PC-9 (cell line): ENCODE measurements at regions of chr12 and their contacts with region 1.

Region 1: GRCh38 chr12:13196130-13196921 is at the start of gene EMP1:
- DNase-seq: peak; percentile 96 to 100
- H3K4me3 ChIP-seq: peak within 1 kb of the TSS; percentile 97
- H3K27ac ChIP-seq: peak within 1 kb of the TSS; percentile 99
- H3K4me1 ChIP-seq: peaks cover 66% of the 10 kb centered on the region
- H3K27me3 ChIP-seq: no peaks in the 10 kb centered on the region
- CTCF ChIP-seq: no peak
- total RNA-seq, gene EMP1: 542 and 909 TPM in 2 replicates

Region 2: GRCh38 chr12:12673296-12673695 is 523.0 kb before region 1 on chr12:
- CTCF ChIA-PET with region 1: no interaction called
- POLR2A ChIA-PET with region 1: no interaction called
- intact Hi-C with region 1: no loop called
- DNase-seq: no peak
- H3K4me3 ChIP-seq: no peak overlapping the region
- H3K27ac ChIP-seq: no peak overlapping the region
- H3K4me1 ChIP-seq: 0 out of 2 replicates have a peak, but pooled peaks cover 4% of the 10 kb centered on the region
- H3K27me3 ChIP-seq: no peaks in the 10 kb centered on the region
- CTCF ChIP-seq: no peak

Region 3: GRCh38 chr12:12901158-12901791 is 295.1 kb before region 1 on chr12:
- CTCF ChIA-PET with region 1: no interaction called
- POLR2A ChIA-PET with region 1: no interaction called
- intact Hi-C with region 1: no loop called
- DNase-seq: peak; percentile 60 to 86
- H3K4me3 ChIP-seq: peak overlapping the region; percentile 19; the same call in 1 of the 2 replicates
- H3K27ac ChIP-seq: peak overlapping the region; percentile 76
- H3K4me1 ChIP-seq: peaks cover 84% of the 10 kb centered on the region
- H3K27me3 ChIP-seq: no peaks in the 10 kb centered on the region
- CTCF ChIP-seq: no peak

Region 4: DNA sequence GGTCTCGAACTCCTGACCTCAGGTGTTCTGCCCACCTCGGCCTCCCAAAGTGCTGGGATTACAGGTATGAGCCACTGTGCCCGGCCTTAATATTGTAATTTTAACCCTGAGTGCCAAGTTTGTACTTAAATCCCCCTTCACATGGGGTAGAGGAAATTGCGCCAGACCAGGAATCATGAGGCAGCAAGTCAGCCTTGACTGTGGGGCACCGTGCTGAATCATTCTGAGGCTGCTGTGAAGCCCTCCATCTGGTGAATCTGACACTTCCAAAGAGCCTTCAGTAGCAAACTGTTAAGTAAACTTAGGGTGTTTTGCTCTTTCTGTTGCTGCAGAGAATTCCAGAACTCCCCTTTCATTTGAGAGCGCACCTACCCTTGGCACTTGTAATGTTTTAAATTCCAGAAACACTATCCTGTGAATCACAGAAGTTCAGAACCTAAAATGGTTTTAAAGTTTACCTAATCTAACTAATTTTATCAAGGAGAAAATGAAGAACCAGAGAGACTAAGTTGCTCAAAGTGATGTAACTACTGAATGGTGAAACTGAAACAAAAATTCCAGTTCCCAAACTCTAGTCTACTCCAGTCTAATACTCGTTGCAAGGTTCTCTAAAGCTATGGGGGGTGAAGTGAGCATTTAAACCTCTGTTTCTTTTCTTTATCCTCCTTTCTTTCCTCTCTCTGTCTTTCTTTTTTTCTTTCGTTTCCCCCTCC is 203.8 kb before region 1 on chr12:
- CTCF ChIA-PET with region 1: interaction called, 6 read pairs
- POLR2A ChIA-PET with region 1: interaction called, 14 read pairs
- intact Hi-C with region 1: no loop called
- DNase-seq: peak in 1 of 2 experiments; percentile 37
- H3K4me3 ChIP-seq: no peak overlapping the region
- H3K27ac ChIP-seq: peak overlapping the region; percentile 46
- H3K4me1 ChIP-seq: peaks cover 24% of the 10 kb centered on the region
- H3K27me3 ChIP-seq: no peaks in the 10 kb centered on the region
- CTCF ChIP-seq: no peak

Region 5: DNA sequence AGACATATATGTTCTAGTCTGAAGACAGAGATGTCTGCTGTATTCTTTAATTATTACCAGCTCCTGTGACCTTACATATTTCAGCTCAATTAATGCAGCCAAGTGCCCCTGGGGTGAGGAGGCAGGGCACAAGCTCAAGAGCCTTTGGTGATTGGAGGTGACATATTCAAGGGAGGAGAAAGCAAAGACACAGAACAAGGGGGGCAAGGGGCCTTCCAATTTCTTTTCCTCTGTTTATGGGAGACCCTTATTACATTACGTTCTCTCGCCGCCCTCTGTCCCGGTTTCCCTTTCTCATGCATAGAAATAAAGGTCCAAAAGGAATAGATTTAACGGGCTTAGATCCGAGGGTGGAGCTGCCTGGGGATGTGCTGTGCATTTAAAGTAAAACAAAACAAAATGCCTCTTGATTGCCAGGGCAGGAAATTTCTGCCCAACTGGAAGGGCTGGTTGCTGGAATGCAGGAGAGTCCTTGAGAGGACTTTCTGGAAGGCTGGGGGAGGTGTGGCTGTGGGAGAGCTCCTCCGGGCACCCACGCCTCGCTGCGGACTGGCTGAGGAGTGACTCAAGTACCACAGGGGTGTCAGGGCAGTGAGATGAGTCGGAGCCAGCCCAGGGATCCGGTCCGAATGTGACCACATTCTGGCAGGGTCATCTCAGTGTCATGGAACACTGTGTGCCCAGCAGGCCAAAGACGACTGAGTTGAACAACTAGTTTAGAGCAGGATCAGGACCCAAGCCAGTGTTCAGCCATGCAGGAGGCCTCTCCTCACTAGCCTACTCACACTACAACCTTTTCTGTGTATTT is 60.8 kb before region 1 on chr12:
- CTCF ChIA-PET with region 1: interaction called, 4 read pairs
- POLR2A ChIA-PET with region 1: interaction called, 48 read pairs
- intact Hi-C with region 1: loop called (anchors 1 kb)
- DNase-seq: peak; percentile 99
- H3K4me3 ChIP-seq: peak overlapping the region; percentile 39; the same call in 1 of the 2 replicates
- H3K27ac ChIP-seq: peak overlapping the region; percentile 88
- H3K4me1 ChIP-seq: peaks cover 50% of the 10 kb centered on the region
- H3K27me3 ChIP-seq: no peaks in the 10 kb centered on the region
- CTCF ChIP-seq: peak; percentile 32; the same call in 1 of the 2 replicates

Region 6: GRCh38 chr12:13165617-13166041 is 30.7 kb before region 1 on chr12:
- CTCF ChIA-PET with region 1: interaction called, 4 read pairs
- POLR2A ChIA-PET with region 1: interaction called, 24 read pairs
- intact Hi-C with region 1: loop called (anchors 1 kb)
- DNase-seq: peak; percentile 95 to 98
- H3K4me3 ChIP-seq: no peak overlapping the region
- H3K27ac ChIP-seq: peak overlapping the region; percentile 97
- H3K4me1 ChIP-seq: peaks cover 73% of the 10 kb centered on the region
- H3K27me3 ChIP-seq: no peaks in the 10 kb centered on the region
- CTCF ChIP-seq: no peak

Region 7: DNA sequence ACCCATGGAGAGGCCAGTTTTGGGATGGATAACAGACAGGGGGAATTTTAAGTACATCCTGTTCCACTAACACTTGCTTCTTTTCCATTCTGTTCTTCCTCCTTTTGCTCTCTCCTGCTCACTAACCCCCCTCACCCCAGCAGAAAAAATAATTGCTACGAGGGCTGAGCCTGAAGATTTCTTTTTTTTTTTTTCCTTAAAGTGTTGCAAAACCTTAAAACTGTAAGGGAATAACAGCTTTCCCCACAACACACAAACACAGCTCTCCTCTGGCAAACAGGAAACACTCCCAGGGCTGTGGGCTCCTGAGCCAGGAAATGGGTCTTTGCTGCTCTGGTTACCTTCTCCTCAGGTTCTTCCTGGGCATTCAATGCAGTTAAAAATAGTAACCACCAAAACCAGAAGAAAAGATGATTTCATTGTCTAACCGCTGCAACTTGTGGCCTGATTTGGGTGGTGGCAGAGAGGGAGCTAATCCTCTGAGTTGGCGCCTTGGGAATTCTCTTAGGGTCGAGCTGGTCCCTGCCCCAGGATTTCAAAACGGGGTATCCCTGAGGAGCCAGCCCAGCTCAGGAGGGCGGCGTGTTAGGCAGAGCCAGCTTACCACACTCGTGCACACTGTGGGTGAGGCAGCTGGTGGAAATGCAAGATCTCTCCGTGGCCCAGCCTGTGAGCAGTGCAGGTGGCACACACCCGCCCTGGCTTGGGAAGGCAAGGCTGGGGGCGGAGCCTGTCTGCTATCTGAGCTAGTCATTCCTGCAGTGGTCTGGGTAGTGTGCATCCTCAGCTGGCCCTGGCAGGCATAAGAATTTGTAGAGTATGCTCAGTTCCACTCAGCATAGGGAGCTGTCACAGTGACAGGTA is 16.9 kb before region 1 on chr12:
- CTCF ChIA-PET with region 1: interaction called, 3 read pairs
- POLR2A ChIA-PET with region 1: interaction called, 138 read pairs
- intact Hi-C with region 1: loop called (anchors 1 kb)
- DNase-seq: peak; percentile 94 to 95
- H3K4me3 ChIP-seq: peak overlapping the region; percentile 39; the same call in 1 of the 2 replicates
- H3K27ac ChIP-seq: peak overlapping the region; percentile 95
- H3K4me1 ChIP-seq: peaks cover 89% of the 10 kb centered on the region
- H3K27me3 ChIP-seq: no peaks in the 10 kb centered on the region
- CTCF ChIP-seq: no peak

Region 8: GRCh38 chr12:13223179-13223859 is 27.0 kb after region 1 on chr12:
- CTCF ChIA-PET with region 1: interaction called, 3 read pairs
- POLR2A ChIA-PET with region 1: interaction called, 19 read pairs
- intact Hi-C with region 1: no loop called
- DNase-seq: peak; percentile 71 to 95
- H3K4me3 ChIP-seq: no peak overlapping the region
- H3K27ac ChIP-seq: peak overlapping the region; percentile 96
- H3K4me1 ChIP-seq: peaks cover 46% of the 10 kb centered on the region
- H3K27me3 ChIP-seq: no peaks in the 10 kb centered on the region
- CTCF ChIP-seq: no peak